ENCODE measurements at regions of chr6 and their contacts with region 1.

Region 1: DNA sequence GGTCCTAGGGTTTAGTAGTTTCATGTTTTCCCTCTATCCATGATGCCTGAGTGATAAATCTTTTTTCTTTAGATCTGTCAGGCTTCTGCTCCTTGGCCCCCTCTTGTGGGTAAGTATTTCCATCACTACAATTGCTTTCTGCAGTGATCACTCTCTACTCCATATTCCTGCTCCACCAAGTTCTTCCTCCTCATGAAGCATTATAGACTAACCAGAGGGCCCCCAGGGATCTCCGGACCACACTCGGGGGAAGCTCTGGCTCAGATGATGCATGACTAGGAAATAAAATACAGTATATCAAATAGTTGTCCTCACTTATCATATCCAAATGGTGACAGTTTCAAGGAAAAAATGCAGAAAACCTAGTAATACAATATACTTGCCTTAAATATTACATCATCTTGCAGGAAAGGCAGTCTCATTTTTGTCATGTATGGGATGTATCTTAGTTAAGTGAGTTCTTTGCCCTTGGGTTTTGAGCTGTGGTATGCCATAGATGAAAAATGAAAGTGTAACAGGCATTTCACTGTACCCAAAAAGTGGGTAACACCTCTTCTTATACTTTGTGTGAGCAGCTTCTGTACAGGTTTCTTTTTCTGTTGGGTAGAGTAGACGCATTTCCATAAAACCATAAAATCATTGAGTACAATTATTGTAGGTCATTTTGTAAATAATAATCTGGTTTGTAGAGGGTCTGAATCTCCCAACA is 200.9 kb upstream of the EYA4 start:
- DNase-seq: no peak
- ATAC-seq: peak; percentile 58 to 76 (median 73)
- H3K4me3 ChIP-seq: no peak overlapping the region
- H3K27ac ChIP-seq: no peak overlapping the region
- H3K4me1 ChIP-seq: no peaks in the 10 kb centered on the region
- H3K27me3 ChIP-seq: no peaks in the 10 kb centered on the region
- CTCF ChIP-seq: peak; percentile 51

Region 2: GRCh38 chr6:131782764-131783163 is 1257.5 kb before region 1 on chr6:
- intact Hi-C with region 1: no loop called
- DNase-seq: no peak
- ATAC-seq: no peak
- H3K4me3 ChIP-seq: no peak overlapping the region
- H3K27ac ChIP-seq: no peak overlapping the region
- H3K4me1 ChIP-seq: no peaks in the 10 kb centered on the region
- H3K27me3 ChIP-seq: no peaks in the 10 kb centered on the region
- CTCF ChIP-seq: peak; percentile 20

Region 3: GRCh38 chr6:132969196-132969595 is 71.1 kb before region 1 on chr6:
- intact Hi-C with region 1: loop called in 1 of 2 experiments (anchors 2 kb)
- DNase-seq: no peak
- ATAC-seq: no peak
- H3K4me3 ChIP-seq: no peak overlapping the region
- H3K27ac ChIP-seq: no peak overlapping the region
- H3K4me1 ChIP-seq: peaks cover 27% of the 10 kb centered on the region
- H3K27me3 ChIP-seq: no peaks in the 10 kb centered on the region
- CTCF ChIP-seq: no peak

Region 4: GRCh38 chr6:132995432-132995831 is 44.8 kb before region 1 on chr6:
- intact Hi-C with region 1: loop called in 1 of 2 experiments (anchors 5 kb)
- DNase-seq: peak; percentile 61 to 88
- ATAC-seq: peak; percentile 98 to 100 (median 99)
- H3K4me3 ChIP-seq: peak overlapping the region; percentile 35
- H3K27ac ChIP-seq: peak overlapping the region; percentile 85
- H3K4me1 ChIP-seq: peaks cover 22% of the 10 kb centered on the region
- H3K27me3 ChIP-seq: no peaks in the 10 kb centered on the region
- CTCF ChIP-seq: no peak